PC-9 (cell line): ENCODE measurements at regions of chr1 and their contacts with region 1.

Region 1: GRCh38 chr1:180154325-180155181 is at the start of gene QSOX1:
- DNase-seq: peak; percentile 70 to 88
- H3K4me3 ChIP-seq: peak within 1 kb of the TSS; percentile 82
- H3K27ac ChIP-seq: peak within 1 kb of the TSS; percentile 73
- H3K4me1 ChIP-seq: peaks cover 61% of the 10 kb centered on the region
- H3K27me3 ChIP-seq: no peaks in the 10 kb centered on the region
- CTCF ChIP-seq: no peak
- total RNA-seq, gene QSOX1: 226 and 263 TPM in 2 replicates

Region 2: DNA sequence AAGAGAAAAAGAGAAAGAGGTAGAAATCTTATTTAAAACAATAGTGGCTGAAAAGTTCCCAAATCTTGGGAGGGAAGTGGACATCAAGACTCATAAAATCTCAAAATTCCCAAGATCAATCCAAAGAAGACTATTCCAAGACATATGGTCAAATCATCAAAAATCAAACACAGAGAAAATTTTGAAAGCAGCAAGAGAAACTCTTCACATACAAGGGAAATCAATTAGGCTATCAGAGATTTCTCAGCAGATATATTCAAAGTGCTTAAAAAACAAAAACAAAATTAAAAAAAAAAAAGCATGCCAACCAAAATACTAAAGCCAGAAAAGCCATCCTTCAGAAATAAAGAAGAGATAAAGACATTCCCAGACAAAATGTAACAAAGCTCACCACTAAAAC is 1482.1 kb before region 1 on chr1:
- CTCF ChIA-PET with region 1: interaction called, 11 read pairs
- POLR2A ChIA-PET with region 1: no interaction called
- intact Hi-C with region 1: no loop called
- DNase-seq: no peak
- H3K4me3 ChIP-seq: no peak overlapping the region
- H3K27ac ChIP-seq: no peak overlapping the region
- H3K4me1 ChIP-seq: no peaks in the 10 kb centered on the region
- H3K27me3 ChIP-seq: no peaks in the 10 kb centered on the region
- CTCF ChIP-seq: no peak

Region 3: GRCh38 chr1:180116964-180117763 is 37.4 kb before region 1 on chr1:
- CTCF ChIA-PET with region 1: no interaction called
- POLR2A ChIA-PET with region 1: no interaction called
- intact Hi-C with region 1: loop called (anchors 5 kb)
- DNase-seq: peak; percentile 15 to 73
- H3K4me3 ChIP-seq: no peak overlapping the region
- H3K27ac ChIP-seq: peak overlapping the region; percentile 66
- H3K4me1 ChIP-seq: peaks cover 19% of the 10 kb centered on the region
- H3K27me3 ChIP-seq: no peaks in the 10 kb centered on the region
- CTCF ChIP-seq: no peak

Region 4: DNA sequence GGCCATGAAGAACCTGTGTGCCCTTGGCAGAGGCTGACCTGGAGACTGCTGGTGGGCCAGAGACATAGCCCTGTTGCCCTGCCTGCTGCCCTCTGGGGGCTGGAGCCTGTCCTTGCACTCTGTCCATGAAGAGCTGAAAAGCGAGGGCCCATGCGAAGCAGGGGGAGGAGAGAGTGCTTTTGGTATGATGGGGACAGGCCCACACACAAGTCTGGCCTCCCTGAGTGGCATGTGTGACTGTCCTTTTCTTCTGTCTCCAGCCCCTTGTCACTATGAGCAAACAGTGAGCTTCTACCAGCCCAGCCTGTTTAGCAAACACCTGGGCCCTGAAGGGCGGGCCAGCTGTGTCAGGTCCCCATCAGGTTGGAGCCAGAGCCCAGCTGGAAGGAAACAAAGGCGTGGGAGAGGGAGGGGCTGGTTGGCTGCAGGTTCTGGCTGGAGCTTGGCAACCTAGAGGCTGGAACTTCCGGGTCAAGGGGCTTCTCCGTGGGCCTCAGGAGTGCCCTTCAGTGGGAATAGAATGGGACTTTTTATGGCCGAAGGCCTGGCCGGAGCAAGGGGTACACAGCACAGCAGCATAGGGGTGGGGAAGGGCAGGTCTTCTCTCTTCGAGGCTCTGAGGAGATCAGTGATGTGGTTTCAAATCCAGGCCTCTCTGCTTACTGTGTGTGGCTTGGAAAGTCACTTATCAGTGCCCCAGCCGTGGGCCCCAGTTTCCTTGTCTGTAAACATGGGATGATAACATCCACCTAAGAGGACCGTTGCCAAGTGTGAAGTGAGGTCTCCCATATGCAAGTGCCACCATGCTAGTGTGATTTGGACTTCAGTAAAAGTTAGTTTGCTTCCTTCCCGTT is 14.5 kb after region 1 on chr1:
- CTCF ChIA-PET with region 1: interaction called, 10 read pairs
- POLR2A ChIA-PET with region 1: interaction called, 4 read pairs
- intact Hi-C with region 1: loop called (anchors 1 kb)
- DNase-seq: peak; percentile 53 to 68
- H3K4me3 ChIP-seq: no peak overlapping the region; the same call in 1 of the 2 replicates
- H3K27ac ChIP-seq: peak overlapping the region; percentile 73
- H3K4me1 ChIP-seq: peaks cover 69% of the 10 kb centered on the region
- H3K27me3 ChIP-seq: no peaks in the 10 kb centered on the region
- CTCF ChIP-seq: peak; percentile 67